ENCODE measurements at regions of chr11 and their contacts with region 1.

Region 1: GRCh38 chr11:112174789-112175598 is at the start of gene BCO2:
- DNase-seq: no peak
- H3K4me3 ChIP-seq: peak within 1 kb of the TSS; percentile 42
- H3K27ac ChIP-seq: no peak within 1 kb of the TSS
- H3K27me3 ChIP-seq: no peaks in the 10 kb centered on the region
- CTCF ChIP-seq: peak; percentile 92
- polyA plus RNA-seq, gene BCO2: 0.94 and 1.3 TPM in 2 replicates

Region 2: DNA sequence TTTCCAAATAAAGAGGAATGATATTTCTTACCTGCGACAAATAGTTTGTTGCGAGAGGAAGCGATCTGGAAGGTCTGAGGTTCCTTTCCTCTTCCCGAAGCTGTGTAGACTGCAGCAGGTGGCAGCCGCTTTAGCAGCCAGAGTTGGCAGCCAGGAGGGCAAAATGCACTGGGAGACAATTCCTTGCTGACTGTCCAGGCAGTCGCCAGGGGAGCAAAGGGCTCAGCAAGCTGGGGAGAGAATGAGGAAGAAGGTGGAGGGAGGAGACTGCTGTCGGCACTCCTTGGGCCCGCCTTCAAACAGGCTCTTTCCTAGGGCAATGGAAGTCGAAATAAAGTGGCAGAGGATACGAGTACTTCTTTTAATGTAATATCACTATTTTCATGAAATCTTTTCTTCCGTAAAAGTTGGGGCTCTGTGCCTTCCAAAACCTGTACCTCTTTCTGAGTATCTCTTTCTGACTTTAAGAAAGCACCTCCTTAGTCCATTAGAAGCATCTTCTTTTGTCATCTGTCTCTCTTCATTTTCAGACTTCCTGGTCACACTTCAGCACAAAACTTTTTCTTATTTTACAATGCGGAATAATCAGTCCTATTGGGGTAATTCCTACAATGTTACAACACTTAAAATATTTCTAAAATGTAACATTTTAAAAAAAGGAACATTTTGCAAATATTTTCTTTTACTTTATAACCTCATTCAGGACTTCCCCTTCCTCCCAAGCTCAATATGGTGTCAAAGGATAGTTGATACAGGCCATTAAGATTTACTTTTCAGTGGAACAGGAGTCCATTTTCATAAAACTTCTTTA is 10.9 kb before region 1 on chr11 and contains the start of gene IL18:
- CTCF ChIA-PET with region 1: interaction called, 12 read pairs
- POLR2A ChIA-PET with region 1: no interaction called
- DNase-seq: no peak
- H3K4me3 ChIP-seq: no peak within 1 kb of the TSS
- H3K27ac ChIP-seq: no peak within 1 kb of the TSS
- H3K27me3 ChIP-seq: no peaks in the 10 kb centered on the region
- CTCF ChIP-seq: no peak
- polyA plus RNA-seq, gene IL18: 0.12 and 0.46 TPM in 2 replicates